ENCODE measurements at regions of chr7 and their contacts with region 1.

Region 1: GRCh38 chr7:26958834-26959233 is 94.4 kb upstream of the SKAP2 start:
- DNase-seq: peak; percentile 79
- ATAC-seq: peak; percentile 80; the same call in 1 of the 2 replicates
- H3K4me3 ChIP-seq: no peak overlapping the region
- H3K27ac ChIP-seq: no peak overlapping the region
- H3K4me1 ChIP-seq: no peaks in the 10 kb centered on the region
- H3K27me3 ChIP-seq: no peaks in the 10 kb centered on the region
- CTCF ChIP-seq: no peak

Region 2: GRCh38 chr7:26930201-26930600 is 28.6 kb before region 1 on chr7:
- CTCF ChIA-PET with region 1: no interaction called
- POLR2A ChIA-PET with region 1: no interaction called
- in situ Hi-C with region 1: no loop called
- intact Hi-C with region 1: no loop called
- DNase-seq: no peak
- ATAC-seq: no peak
- H3K4me3 ChIP-seq: no peak overlapping the region
- H3K27ac ChIP-seq: no peak overlapping the region
- H3K4me1 ChIP-seq: no peaks in the 10 kb centered on the region
- H3K27me3 ChIP-seq: no peaks in the 10 kb centered on the region
- CTCF ChIP-seq: no peak

Region 3: GRCh38 chr7:26993816-26994810 is 35.3 kb after region 1 on chr7:
- CTCF ChIA-PET with region 1: no interaction called
- POLR2A ChIA-PET with region 1: no interaction called
- in situ Hi-C with region 1: no loop called
- intact Hi-C with region 1: no loop called
- DNase-seq: no peak
- ATAC-seq: no peak
- H3K4me3 ChIP-seq: no peak overlapping the region
- H3K27ac ChIP-seq: no peak overlapping the region
- H3K4me1 ChIP-seq: no peaks in the 10 kb centered on the region
- H3K27me3 ChIP-seq: no peaks in the 10 kb centered on the region
- CTCF ChIP-seq: no peak

Region 4: DNA sequence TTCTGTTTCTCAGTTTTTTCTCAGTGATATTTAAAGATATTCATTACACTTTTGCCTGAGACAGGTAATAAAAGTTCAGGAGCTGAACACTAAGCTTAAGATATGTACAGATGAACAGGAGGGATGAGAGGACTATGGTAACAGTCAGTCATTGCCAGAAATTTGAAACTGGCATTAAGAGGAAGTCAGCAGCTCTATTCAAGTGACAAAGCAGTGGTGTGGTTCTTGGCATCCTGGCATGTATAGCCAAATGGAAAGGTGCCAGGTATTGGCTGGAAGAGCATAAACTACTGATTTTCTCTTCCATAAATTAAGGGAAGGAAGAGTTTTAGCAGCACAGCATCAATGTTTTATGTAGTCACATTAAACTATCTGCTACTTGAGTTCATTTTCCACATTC is 114.2 kb after region 1 on chr7:
- CTCF ChIA-PET with region 1: no interaction called
- POLR2A ChIA-PET with region 1: interaction called, 15 read pairs
- in situ Hi-C with region 1: no loop called
- intact Hi-C with region 1: no loop called
- DNase-seq: no peak
- ATAC-seq: no peak
- H3K4me3 ChIP-seq: no peak overlapping the region
- H3K27ac ChIP-seq: no peak overlapping the region
- H3K4me1 ChIP-seq: peaks cover 16% of the 10 kb centered on the region
- H3K27me3 ChIP-seq: no peaks in the 10 kb centered on the region
- CTCF ChIP-seq: no peak

Region 5: DNA sequence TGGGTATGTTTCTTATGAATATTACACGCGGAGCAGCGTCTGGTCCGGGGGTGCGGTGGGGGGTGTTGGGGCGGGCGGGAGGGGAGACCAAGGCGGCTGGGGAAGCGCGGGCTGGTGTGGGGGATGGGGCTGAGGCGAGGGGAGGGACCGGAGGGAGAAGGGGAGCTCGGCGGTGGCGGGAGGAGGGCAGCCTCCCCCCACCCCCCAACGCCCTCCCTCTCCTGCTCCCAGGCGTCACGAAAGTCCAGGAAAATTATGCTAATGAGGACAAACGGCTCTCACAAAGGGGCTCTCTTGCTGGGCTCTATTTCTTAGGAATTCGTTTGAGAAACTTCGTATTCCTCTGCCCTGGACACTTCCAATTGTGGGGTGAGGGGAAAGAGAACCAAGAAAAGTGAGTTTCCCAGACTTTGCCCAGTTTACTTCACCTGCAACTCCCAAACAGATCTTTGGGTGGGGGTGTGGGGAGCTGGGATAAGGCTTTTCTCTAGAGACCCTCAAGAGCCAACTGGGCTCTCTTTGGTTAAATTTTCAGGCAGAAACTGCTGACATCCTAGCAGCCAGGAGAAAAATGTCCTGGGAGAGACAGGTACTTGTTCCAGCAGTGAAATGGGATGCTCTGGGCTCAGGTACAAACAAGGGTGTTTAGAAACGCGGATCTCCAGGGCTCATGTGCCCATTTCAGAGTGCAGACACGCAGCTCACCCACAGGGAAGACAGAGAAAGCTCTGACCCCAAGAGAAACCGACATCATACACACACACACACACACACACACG is 155.3 kb after region 1 on chr7:
- CTCF ChIA-PET with region 1: no interaction called
- POLR2A ChIA-PET with region 1: no interaction called
- in situ Hi-C with region 1: no loop called
- intact Hi-C with region 1: no loop called
- DNase-seq: no peak
- ATAC-seq: peak; percentile 46
- H3K4me3 ChIP-seq: peak overlapping the region; percentile 60 to 92
- H3K27ac ChIP-seq: peak overlapping the region; percentile 99
- H3K4me1 ChIP-seq: peaks cover 61% of the 10 kb centered on the region
- H3K27me3 ChIP-seq: no peaks in the 10 kb centered on the region
- CTCF ChIP-seq: no peak